ENCODE measurements at regions of chr5 and their contacts with region 1.

Region 1: GRCh38 chr5:42889311-42889933 is 77.7 kb upstream of the SELENOP start:
- DNase-seq: peak; percentile 36 to 79 (median 54)
- ATAC-seq: peak; percentile 90
- H3K4me3 ChIP-seq: no peak overlapping the region
- H3K4me3 Mint-ChIP-seq: no peak overlapping the region
- H3K27ac ChIP-seq: no peak overlapping the region
- H3K27ac Mint-ChIP-seq: no peak overlapping the region
- H3K4me1 ChIP-seq: no peaks in the 10 kb centered on the region
- H3K4me1 Mint-ChIP-seq: no peaks in the 10 kb centered on the region
- H3K27me3 ChIP-seq: no peaks in the 10 kb centered on the region
- H3K27me3 Mint-ChIP-seq: peaks cover 9% of the 10 kb centered on the region
- CTCF ChIP-seq: peak; percentile 90

Region 2: GRCh38 chr5:42005561-42006153 is 883.8 kb before region 1 on chr5:
- CTCF ChIA-PET with region 1: no interaction called
- POLR2A ChIA-PET with region 1: no interaction called
- intact Hi-C with region 1: loop called in 1 of 2 experiments (anchors 5 kb)
- DNase-seq: peak in 3 of 14 experiments; percentile 5 to 19 (median 15)
- ATAC-seq: no peak
- H3K4me3 ChIP-seq: no peak overlapping the region
- H3K4me3 Mint-ChIP-seq: no peak overlapping the region
- H3K27ac ChIP-seq: no peak overlapping the region
- H3K27ac Mint-ChIP-seq: no peak overlapping the region
- H3K4me1 ChIP-seq: no peaks in the 10 kb centered on the region
- H3K4me1 Mint-ChIP-seq: no peaks in the 10 kb centered on the region
- H3K27me3 ChIP-seq: no peaks in the 10 kb centered on the region
- H3K27me3 Mint-ChIP-seq: peaks cover 12% of the 10 kb centered on the region
- CTCF ChIP-seq: peak; percentile 81

Region 3: GRCh38 chr5:42423285-42424165 is 465.9 kb before region 1 on chr5 and contains the start of gene GHR:
- CTCF ChIA-PET with region 1: no interaction called
- POLR2A ChIA-PET with region 1: no interaction called
- intact Hi-C with region 1: loop called in 1 of 2 experiments (anchors 10 kb)
- DNase-seq: peak in 3 of 14 experiments; percentile 13 to 27 (median 17)
- ATAC-seq: no peak
- H3K4me3 ChIP-seq: peak within 1 kb of the TSS; percentile 10
- H3K4me3 Mint-ChIP-seq: no peak within 1 kb of the TSS
- H3K27ac ChIP-seq: no peak within 1 kb of the TSS
- H3K27ac Mint-ChIP-seq: no peak within 1 kb of the TSS
- H3K4me1 ChIP-seq: peaks cover 8% of the 10 kb centered on the region
- H3K4me1 Mint-ChIP-seq: no peaks in the 10 kb centered on the region
- H3K27me3 ChIP-seq: peaks cover 15 to 40% of the 10 kb centered on the region in 2 experiments
- H3K27me3 Mint-ChIP-seq: peaks cover 13% of the 10 kb centered on the region
- CTCF ChIP-seq: no peak
- total RNA-seq, gene GHR: not detected

Region 4: DNA sequence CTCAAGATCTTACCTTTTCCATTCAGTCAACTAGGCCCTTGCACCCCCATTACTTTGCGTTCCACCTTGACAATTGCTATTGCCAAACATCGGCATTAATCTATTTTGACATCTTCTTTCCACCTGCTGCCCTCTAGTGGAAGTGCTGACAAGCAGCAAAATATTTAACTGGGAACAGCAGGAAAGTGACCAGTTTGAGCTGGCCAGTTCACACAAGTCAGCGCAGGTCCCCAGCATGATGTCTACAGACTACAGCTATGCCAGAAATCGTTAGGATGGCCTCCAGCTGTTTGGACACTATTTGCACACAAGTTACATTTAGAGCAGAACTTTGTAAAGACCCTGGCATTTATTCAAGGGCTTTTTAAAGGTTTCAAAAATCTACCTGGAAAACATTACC is 306.1 kb before region 1 on chr5:
- CTCF ChIA-PET with region 1: no interaction called
- POLR2A ChIA-PET with region 1: no interaction called
- intact Hi-C with region 1: loop called in 1 of 2 experiments (anchors 10 kb)
- DNase-seq: peak in 5 of 14 experiments; percentile 15 to 54 (median 43)
- ATAC-seq: no peak
- H3K4me3 ChIP-seq: no peak overlapping the region
- H3K4me3 Mint-ChIP-seq: no peak overlapping the region
- H3K27ac ChIP-seq: no peak overlapping the region
- H3K27ac Mint-ChIP-seq: no peak overlapping the region
- H3K4me1 ChIP-seq: no peaks in the 10 kb centered on the region
- H3K4me1 Mint-ChIP-seq: no peaks in the 10 kb centered on the region
- H3K27me3 ChIP-seq: peaks cover 0 to 8% of the 10 kb centered on the region in 2 experiments
- H3K27me3 Mint-ChIP-seq: peaks cover 40% of the 10 kb centered on the region
- CTCF ChIP-seq: peak; percentile 68

Region 5: DNA sequence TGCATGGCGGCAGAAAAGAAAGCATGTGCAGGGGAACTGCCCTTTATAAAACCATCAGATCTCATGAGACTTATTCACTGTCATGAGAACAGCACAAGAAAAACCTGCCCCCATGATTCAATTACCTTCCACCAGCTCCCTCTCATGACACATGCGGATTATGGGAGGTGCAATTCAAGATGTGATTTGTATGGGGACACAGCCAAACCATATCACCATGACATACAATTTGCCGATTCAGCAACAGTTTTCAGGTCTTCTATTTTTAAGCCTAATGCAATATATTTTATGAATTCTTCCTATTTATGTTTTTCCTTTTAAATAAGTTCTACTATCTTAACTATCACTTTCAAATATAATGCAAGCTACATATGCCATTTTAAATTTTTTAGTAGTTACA is 223.6 kb before region 1 on chr5:
- CTCF ChIA-PET with region 1: no interaction called
- POLR2A ChIA-PET with region 1: no interaction called
- intact Hi-C with region 1: no loop called
- DNase-seq: no peak
- ATAC-seq: no peak
- H3K4me3 ChIP-seq: no peak overlapping the region
- H3K4me3 Mint-ChIP-seq: no peak overlapping the region
- H3K27ac ChIP-seq: no peak overlapping the region
- H3K27ac Mint-ChIP-seq: no peak overlapping the region
- H3K4me1 ChIP-seq: no peaks in the 10 kb centered on the region
- H3K4me1 Mint-ChIP-seq: no peaks in the 10 kb centered on the region
- H3K27me3 ChIP-seq: no peaks in the 10 kb centered on the region
- H3K27me3 Mint-ChIP-seq: peaks cover 7% of the 10 kb centered on the region
- CTCF ChIP-seq: no peak

Region 6: DNA sequence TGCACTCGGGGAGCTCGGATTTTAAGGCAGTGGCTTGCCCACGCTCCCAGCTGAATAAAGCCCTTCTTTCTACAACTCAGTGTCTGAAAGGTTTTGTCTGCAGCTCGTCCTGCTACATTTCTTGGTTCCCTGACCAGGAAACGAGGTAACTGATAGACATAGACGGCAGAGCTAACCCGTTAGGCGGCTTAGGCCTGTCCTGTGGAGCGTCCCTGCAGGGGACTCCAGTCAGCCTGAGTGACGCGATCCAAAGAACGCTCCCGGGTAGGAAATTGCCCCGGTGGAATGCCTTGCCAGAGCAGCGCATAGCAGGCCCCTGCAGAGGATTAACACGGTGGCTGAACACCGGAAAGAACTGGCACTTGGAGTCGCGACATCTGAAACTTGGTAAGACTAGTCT is 75.9 kb before region 1 on chr5:
- CTCF ChIA-PET with region 1: no interaction called
- POLR2A ChIA-PET with region 1: no interaction called
- intact Hi-C with region 1: no loop called
- DNase-seq: no peak
- ATAC-seq: no peak
- H3K4me3 ChIP-seq: no peak overlapping the region
- H3K4me3 Mint-ChIP-seq: no peak overlapping the region
- H3K27ac ChIP-seq: no peak overlapping the region
- H3K27ac Mint-ChIP-seq: no peak overlapping the region
- H3K4me1 ChIP-seq: no peaks in the 10 kb centered on the region
- H3K4me1 Mint-ChIP-seq: no peaks in the 10 kb centered on the region
- H3K27me3 ChIP-seq: no peaks in the 10 kb centered on the region
- H3K27me3 Mint-ChIP-seq: no peaks in the 10 kb centered on the region
- CTCF ChIP-seq: no peak